ENCODE measurements at regions of chr2 and their contacts with region 1.

Region 1: GRCh38 chr2:11692966-11693521 is 23.0 kb upstream of the NTSR2 start:
- DNase-seq: peak; percentile 61
- ATAC-seq: peak; percentile 34 to 52

Region 2: DNA sequence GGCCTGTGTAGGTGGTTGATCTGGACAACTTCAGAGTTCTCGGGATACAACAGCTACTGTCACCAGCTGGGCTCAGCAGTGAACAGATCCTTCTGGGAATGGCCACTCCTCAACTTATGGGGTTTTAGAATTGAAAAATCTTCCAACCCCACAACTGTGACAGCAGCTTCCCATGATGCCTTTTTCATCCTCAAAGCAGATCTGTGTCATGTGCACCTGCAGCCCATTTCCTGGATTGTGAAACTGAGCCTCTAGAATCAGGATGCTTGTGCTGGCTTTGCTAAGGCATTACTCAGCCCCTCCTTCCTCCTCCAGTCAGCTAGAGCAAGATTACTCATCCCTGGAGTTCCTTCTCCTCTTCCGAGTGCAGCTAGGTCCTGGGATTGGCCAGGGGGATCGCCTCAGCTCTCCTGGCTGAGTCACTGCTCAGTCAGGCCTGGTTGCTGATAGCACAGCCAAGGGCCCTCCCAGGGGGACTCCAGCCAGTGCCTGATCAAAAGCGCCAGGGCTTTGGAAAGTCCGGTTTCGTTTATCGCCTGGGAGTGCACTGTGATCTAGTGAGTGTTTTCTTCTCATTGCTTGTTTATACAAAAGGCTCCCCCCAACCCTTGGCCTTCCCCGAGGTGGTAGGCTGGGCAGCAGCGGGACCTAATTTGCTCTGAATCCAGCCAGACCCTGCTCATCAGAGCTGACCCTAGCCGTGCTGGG is 51.0 kb after region 1 on chr2:
- intact Hi-C with region 1: loop called (anchors 5 to 10 kb)
- DNase-seq: peak; percentile 97
- ATAC-seq: peak; percentile 84 to 95

Region 3: DNA sequence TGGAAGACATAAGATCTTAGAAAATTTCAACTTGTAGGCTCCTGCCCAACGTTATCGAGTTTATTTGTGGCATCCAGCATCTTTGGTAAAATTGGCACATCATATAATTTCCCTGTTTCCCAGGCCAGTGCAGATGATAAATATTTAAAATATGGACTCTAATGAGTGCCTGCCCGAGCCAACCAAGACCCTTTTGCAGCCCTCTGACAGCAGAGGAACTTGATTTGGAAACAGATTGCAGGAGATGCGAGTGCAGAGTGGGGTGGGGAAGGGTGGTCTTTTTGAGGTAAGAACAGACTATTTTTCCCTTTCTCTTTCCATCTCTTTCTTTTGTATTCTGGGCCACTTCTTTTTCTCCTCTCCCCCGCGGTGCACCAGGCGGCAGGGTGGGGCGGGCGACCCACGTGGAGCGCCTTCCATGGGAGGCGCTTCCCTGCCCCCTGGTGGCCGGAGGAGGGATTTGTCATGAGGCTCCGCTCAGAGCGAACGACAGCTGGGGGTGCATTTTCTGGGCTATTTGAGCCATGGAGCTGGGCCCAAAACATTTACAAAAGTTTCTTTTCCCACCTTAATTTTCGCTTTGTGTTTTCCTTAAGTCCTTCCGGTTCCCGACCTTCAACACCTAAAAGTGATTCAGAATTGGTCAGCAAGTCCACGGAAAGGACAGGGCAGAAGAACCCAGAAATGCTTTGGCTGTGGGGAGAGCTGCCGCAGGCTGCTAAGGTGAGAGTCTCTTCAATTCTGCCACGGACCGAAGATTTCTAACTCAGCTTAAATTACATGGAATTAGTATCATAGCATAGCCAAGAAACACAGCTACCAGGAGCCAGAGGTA is 86.1 kb after region 1 on chr2:
- intact Hi-C with region 1: loop called (anchors 2 to 5 kb)
- DNase-seq: peak; percentile 86
- ATAC-seq: peak; percentile 94 to 96

Region 4: GRCh38 chr2:11784747-11785610 is 91.9 kb after region 1 on chr2:
- intact Hi-C with region 1: loop called in 1 of 2 experiments (anchors 5 kb)
- DNase-seq: peak; percentile 42
- ATAC-seq: peak; percentile 69 to 74

Measured in left cardiac atrium (tissue), 4 donors.